ENCODE measurements at regions of chr17 and their contacts with region 1.

Region 1: DNA sequence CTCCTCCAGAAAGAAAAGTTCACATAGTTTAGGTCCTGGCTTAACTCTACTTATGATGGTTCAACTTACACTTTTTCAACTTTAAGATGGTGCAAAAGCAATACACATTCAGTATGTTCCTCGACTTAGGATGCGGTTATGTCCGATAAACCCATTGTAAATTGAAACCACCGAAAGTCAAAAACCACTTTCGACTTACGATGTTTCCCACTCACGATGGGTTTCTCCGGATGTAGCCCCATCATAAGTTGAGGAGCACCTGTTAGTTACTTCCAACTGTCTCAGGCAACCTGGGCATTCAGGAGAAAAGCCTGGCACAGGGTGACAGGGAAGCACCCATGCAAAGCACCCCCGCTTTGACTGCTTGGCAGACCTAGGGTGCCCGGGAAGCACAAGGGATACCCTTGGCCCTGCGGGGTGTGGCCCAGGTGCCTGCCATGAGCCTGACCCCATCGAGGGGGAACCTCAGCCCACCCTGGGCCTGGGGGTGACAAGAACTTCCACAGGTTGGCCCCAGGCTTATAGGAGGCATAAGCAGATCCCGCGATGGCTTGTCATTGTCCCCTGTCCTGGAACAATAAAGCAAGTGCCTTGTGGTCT is 14.0 kb downstream of the UNC119 start:
- DNase-seq: no peak

Region 2: DNA sequence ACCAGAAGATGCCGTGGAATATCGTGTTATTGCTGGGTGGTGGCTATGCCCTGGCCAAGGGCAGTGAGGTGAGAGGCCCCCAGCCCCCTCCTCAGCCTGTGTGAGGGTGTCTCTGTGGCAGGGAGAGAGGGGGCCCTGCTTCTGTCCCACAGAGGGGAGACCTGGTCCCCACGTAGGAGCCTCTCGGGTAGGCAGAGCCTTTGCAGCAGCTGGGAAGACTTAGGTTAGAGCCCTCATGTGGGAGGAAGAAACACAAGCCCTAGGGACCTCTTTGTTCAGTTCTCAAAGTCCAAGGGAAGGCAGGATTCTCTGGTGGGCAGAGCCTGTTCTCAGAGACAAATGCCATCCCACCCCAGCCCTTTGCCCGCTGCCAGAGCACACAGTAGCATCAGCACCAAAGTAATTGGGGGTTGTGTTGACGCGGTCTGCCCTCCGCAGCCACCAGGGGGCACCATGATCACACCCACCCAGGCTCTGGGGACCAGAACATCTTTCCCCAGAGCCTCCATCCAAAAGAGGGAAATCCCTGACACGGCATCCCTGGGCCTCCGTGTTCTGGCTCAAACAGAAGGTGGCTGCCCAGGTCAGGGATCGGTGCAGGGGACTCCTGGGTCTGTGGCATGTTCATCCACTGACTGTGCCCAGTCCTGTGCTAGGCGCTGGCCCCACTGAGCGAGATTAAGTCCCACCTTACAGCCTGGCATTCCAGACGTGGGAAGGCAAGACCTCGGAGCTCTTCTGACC is 43.8 kb before region 1 on chr17:
- intact Hi-C with region 1: loop called (anchors 2 kb)
- DNase-seq: peak; percentile 88

Region 3: GRCh38 chr17:28634206-28634856 is 95.9 kb after region 1 on chr17:
- intact Hi-C with region 1: no loop called
- DNase-seq: no peak